ENCODE measurements at regions of chr17 and their contacts with region 1.

Region 1: GRCh38 chr17:51120739-51121617 is at the start of gene SPAG9:
- DNase-seq: peak; percentile 98 to 99
- ATAC-seq: peak; percentile 94
- H3K4me3 ChIP-seq: peak within 1 kb of the TSS; percentile 50 to 97
- H3K27ac ChIP-seq: peak within 1 kb of the TSS; percentile 94 to 100
- H3K4me1 ChIP-seq: peaks cover 0 to 5% of the 10 kb centered on the region in 2 donors
- H3K27me3 ChIP-seq: no peaks in the 10 kb centered on the region
- total RNA-seq, gene SPAG9: 137 to 151 TPM

Region 2: GRCh38 chr17:51166197-51166986 is 45.4 kb after region 1 on chr17 and contains the start of gene NME2:
- intact Hi-C with region 1: loop called in 1 of 2 experiments (anchors 5 kb)
- DNase-seq: peak; percentile 95 to 96
- ATAC-seq: peak; percentile 95
- H3K4me3 ChIP-seq: peak within 1 kb of the TSS; percentile 57 to 66
- H3K27ac ChIP-seq: peak within 1 kb of the TSS; percentile 40 to 83
- H3K4me1 ChIP-seq: no peaks in the 10 kb centered on the region
- H3K27me3 ChIP-seq: no peaks in the 10 kb centered on the region
- total RNA-seq, gene NME2: 306 to 366 TPM

Region 3: GRCh38 chr17:51407559-51407958 is 286.6 kb after region 1 on chr17:
- intact Hi-C with region 1: no loop called
- DNase-seq: no peak
- ATAC-seq: no peak
- H3K4me3 ChIP-seq: no peak overlapping the region
- H3K27ac ChIP-seq: no peak overlapping the region
- H3K4me1 ChIP-seq: no peaks in the 10 kb centered on the region
- H3K27me3 ChIP-seq: no peaks in the 10 kb centered on the region